Ovary (tissue), 10 donors: ENCODE measurements at regions of chr9 and their contacts with region 1.

Region 1: DNA sequence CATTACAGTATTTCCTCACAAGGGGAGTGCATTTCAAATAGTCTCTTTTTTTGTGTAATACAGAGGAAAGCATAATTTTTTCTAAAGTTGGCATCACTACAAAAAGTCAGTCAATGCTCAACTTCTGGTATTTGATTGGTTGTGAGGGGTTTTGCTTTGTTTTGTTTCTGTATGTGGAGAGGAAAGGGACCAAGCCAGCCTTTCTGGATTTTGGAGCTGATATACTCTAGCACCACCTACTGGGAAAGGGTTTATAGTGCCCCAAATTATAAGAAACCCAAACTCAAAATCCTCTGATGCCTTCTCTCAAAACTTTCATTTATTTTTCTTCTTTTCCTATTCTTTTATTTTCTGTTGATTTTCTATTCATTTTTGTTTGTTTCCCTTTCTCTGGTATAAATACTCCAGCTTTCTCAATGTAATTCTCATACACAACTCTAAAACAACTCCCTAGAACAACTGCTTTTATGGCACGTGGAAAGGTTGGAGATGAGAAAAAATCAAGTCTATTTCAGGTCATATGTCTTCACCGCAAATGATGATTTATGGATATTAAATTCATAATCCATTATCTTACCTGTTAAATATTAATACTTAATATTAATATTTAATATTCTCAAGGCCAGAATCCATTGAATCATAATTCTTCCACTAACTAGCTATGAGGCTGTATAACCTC is 69.5 kb upstream of the ANXA1 start:
- DNase-seq: peak in 1 of 5 donors; percentile 36
- H3K4me3 ChIP-seq: no peak overlapping the region
- H3K27ac ChIP-seq: no peak overlapping the region
- H3K4me1 ChIP-seq: peaks cover 4% of the 10 kb centered on the region
- H3K27me3 ChIP-seq: no peaks in the 10 kb centered on the region
- CTCF ChIP-seq: peak; percentile 49 to 85 (median 73)
- EP300 ChIP-seq: no peak
- POLR2A ChIP-seq: no peak

Region 2: DNA sequence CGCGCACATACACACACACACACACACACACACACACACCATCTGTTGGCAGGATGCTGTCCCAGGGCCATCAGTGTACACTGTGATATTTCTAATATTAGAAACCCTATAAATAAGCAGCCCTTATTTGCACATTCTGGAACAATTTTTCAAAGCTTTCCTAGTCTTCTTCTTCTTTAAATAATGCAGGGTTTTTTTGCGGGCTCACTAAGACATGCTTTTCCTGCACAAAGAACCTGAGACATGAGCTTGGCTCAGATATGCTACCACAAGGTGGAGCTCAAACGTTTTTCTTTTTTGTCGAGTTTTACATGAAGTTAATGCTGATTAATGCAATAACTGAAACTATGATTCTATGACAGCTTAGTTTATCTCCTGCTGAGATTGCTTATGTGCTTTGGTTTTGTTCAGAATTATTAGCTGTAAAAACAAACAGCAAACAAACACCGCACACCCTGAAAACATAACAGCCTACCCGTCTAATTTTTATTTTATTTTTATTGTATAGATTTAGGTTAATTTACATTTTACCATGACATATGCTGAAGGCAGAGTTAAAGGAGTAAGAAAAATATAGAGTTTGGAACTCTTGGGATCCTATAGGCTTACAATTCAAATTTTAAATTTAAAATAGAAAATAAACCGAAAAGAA is 225.0 kb before region 1 on chr9:
- intact Hi-C with region 1: loop called in 2 of 4 experiments (anchors 5 to 10 kb)
- DNase-seq: peak in 3 of 5 donors; percentile 16 to 59 (median 25)
- H3K4me3 ChIP-seq: no peak overlapping the region
- H3K27ac ChIP-seq: no peak overlapping the region
- H3K4me1 ChIP-seq: peaks cover 10% of the 10 kb centered on the region
- H3K27me3 ChIP-seq: no peaks in the 10 kb centered on the region
- CTCF ChIP-seq: peak; percentile 54 to 71 (median 68)
- EP300 ChIP-seq: no peak
- POLR2A ChIP-seq: no peak

Region 3: GRCh38 chr9:72871685-72872084 is 210.4 kb before region 1 on chr9:
- intact Hi-C with region 1: loop called in 1 of 4 experiments (anchors 5 kb)
- DNase-seq: no peak
- H3K4me3 ChIP-seq: no peak overlapping the region
- H3K27ac ChIP-seq: no peak overlapping the region
- H3K4me1 ChIP-seq: peaks cover 8% of the 10 kb centered on the region
- H3K27me3 ChIP-seq: no peaks in the 10 kb centered on the region
- CTCF ChIP-seq: peak in 2 of 3 donors; percentile 22 to 47
- EP300 ChIP-seq: no peak
- POLR2A ChIP-seq: no peak

Region 4: DNA sequence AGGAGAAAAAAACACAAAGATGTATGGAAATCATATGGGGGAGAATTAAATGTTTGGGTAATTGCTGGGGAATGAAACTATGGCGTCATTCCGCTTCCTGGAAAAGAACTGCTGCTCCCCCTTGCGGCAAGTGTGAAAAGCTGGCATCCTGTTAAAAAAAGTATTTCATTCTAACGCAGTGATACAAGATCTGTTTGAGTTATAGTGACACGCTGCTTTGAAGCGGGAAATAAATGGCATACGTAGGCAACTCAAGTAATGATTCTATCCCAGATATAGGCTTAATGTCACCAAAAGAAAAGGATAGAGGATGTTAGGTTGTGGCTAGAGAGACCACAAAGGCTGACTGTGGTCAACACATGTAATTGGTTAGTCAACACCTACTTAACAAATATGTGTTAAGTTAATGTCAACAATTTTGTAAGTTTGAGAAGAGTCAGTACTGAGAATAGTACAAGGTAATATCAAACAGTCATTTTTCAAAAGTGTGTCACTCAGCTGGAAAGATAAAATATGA is 59.0 kb before region 1 on chr9:
- intact Hi-C with region 1: loop called in 1 of 4 experiments (anchors 10 kb)
- DNase-seq: peak; percentile 39 to 67 (median 54)
- H3K4me3 ChIP-seq: no peak overlapping the region
- H3K27ac ChIP-seq: no peak overlapping the region
- H3K4me1 ChIP-seq: peaks cover 1% of the 10 kb centered on the region
- H3K27me3 ChIP-seq: no peaks in the 10 kb centered on the region
- CTCF ChIP-seq: peak; percentile 47 to 79 (median 78)
- EP300 ChIP-seq: no peak
- POLR2A ChIP-seq: no peak

Region 5: GRCh38 chr9:73034962-73035361 is 47.2 kb before region 1 on chr9:
- intact Hi-C with region 1: loop called in 1 of 4 experiments (anchors 5 kb)
- DNase-seq: no peak
- H3K4me3 ChIP-seq: no peak overlapping the region
- H3K27ac ChIP-seq: no peak overlapping the region
- H3K4me1 ChIP-seq: peaks cover 7% of the 10 kb centered on the region
- H3K27me3 ChIP-seq: no peaks in the 10 kb centered on the region
- CTCF ChIP-seq: no peak
- EP300 ChIP-seq: no peak
- POLR2A ChIP-seq: no peak

Region 6: DNA sequence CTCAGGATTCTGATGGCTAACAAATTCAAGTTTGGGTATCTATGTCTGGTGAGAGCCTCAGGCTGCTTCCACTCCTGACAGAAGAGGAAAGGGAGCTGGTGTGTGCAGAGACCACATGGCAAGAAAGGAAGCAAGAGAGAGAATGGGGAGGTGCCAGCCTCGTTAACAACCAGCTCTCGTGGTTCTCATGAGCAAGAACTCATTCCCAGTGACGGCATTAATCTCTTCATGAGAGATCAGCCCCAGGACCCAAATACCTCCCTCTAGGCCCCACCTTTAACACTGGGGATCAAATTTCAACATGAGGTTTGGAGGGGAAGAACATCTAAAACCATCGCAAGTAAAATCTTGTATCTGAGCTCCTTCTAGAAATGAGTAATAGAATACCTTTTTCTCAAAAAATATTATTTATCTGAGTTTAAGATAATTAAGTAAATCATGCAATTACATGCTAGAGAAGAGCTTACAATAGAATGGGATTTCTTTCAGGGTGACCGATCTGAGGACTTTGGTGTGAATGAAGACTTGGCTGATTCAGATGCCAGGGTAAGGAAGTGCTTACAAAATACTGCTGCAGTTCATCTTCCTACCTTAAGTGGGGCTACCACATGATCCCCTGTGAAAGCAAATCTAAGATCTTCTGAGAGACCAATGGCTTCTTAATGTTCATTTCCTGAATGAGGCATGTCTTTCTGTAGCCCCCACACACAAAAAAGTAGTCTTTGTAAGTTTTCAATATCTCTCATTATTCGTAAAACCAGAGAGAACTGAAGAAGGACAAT is 81.1 kb after region 1 on chr9:
- intact Hi-C with region 1: no loop called
- DNase-seq: no peak
- H3K4me3 ChIP-seq: no peak overlapping the region
- H3K27ac ChIP-seq: no peak overlapping the region
- H3K4me1 ChIP-seq: no peaks in the 10 kb centered on the region
- H3K27me3 ChIP-seq: no peaks in the 10 kb centered on the region
- CTCF ChIP-seq: no peak
- EP300 ChIP-seq: no peak
- POLR2A ChIP-seq: no peak

Region 7: GRCh38 chr9:73200694-73201452 is 118.8 kb after region 1 on chr9:
- intact Hi-C with region 1: no loop called
- DNase-seq: no peak
- H3K4me3 ChIP-seq: no peak overlapping the region
- H3K27ac ChIP-seq: no peak overlapping the region
- H3K4me1 ChIP-seq: no peaks in the 10 kb centered on the region
- H3K27me3 ChIP-seq: no peaks in the 10 kb centered on the region
- CTCF ChIP-seq: peak in 1 of 3 donors; percentile 11
- EP300 ChIP-seq: no peak
- POLR2A ChIP-seq: no peak

Region 8: DNA sequence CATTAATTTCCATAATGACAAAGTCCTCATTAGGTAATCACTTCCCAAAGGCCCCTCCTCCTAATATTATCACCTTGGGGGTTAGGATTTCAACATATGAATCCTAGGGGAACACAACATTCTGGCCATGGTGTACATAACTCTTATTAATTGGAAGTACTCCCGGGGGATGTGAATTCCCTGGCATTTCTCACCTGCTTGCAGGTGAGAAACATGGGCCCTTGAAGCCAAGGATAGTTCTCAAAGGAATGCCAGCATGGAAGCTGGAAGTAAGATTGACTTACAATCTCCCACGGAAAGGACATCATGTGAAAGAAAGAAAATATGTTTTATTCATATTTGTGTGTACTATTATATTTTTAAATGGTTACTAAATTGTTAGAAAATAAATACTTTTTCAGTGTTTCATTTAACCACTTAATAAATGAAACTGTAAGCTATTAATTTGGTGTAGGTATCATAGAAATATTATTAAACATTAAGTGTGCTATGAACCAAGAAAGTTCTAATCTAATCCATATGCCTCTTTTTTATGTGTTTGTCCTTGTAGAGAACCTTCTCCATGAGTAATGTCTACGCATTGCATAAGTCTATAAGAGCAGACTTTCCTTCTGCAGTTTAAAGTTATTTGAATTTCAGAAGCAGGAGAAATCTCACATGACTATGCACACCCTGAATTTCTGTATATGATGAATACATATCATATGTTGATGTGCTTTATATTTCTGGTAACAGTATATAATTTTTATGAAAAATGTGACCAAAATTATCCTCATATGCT is 129.0 kb after region 1 on chr9:
- intact Hi-C with region 1: no loop called
- DNase-seq: no peak
- H3K4me3 ChIP-seq: no peak overlapping the region
- H3K27ac ChIP-seq: no peak overlapping the region
- H3K4me1 ChIP-seq: no peaks in the 10 kb centered on the region
- H3K27me3 ChIP-seq: no peaks in the 10 kb centered on the region
- CTCF ChIP-seq: no peak
- EP300 ChIP-seq: no peak
- POLR2A ChIP-seq: no peak

Region 9: DNA sequence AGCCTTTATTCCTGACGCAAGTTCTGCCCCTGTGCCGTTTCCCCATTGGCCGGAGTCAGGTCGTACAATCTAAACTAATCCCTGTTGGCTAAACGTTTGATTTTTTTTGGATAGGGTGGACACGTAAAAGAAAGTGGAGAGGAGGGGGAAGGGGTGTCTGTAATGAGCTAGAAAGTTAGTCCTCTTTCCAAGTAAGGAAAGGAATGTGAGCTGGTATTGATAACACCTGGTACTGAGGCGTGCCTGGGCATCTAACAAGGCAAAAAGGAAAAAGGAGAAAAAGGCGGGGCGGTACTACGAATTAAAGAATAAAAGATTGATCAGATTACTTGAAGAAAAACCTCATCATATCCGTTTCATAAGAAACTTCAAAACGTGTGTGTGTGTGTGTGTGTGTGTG is 734.8 kb after region 1 on chr9:
- intact Hi-C with region 1: no loop called
- DNase-seq: no peak
- H3K4me3 ChIP-seq: no peak overlapping the region
- H3K27ac ChIP-seq: no peak overlapping the region
- H3K4me1 ChIP-seq: no peaks in the 10 kb centered on the region
- H3K27me3 ChIP-seq: no peaks in the 10 kb centered on the region
- CTCF ChIP-seq: no peak
- EP300 ChIP-seq: no peak
- POLR2A ChIP-seq: no peak